Activated B cell treated with CpG ODN at 0.5 μM for 24 hours (primary cell): ENCODE measurements at regions of chr4 and their contacts with region 1.

Region 1: DNA sequence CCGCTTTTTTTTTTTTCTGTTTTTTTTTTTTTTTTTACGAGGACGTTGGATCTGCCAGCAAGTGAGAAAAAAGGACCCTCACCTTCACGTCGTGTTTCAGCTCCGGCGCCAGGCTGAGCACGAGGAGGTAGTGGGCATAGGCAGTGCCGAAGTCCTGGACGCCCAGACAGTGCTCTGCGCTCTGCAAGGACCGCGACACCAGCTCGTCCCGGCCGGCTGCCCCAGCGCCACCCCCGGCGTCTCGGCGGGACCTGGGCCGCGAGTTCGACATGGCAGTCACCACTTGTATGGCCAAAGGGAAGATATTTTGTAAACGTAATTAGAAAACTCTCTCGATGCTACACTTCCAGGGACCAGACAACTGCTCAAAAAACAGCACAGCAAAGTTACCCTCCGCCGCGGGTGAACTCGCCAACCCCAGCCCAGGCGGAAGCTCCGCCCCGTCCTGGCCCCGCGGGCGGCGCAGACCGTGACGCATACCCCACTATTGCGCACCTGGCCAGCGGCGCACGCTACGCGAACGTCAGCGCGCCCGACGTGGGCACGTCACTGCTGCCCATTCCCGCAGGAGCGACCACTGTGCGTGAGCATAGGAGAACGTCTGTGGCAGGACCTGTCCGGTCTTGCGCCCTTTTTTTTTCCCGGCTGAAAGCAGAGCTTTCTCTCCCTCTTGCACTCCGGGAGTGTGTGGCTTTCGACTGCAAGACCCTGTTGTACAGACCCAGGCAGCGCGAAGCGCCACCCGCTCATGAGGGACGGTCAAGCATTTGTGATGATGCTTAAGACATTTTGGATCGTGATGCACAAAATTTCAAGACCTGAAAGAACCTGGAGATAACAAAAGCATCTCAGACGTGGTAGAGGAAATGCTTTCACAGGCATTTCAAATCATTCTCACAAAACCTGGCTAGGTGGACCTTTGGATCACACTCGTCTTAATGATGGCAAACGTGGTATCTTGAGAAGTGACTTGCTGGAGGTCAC is at the start of gene PRMT9:
- DNase-seq: peak; percentile 83
- ATAC-seq: peak; percentile 97
- H3K4me3 Mint-ChIP-seq: peak within 1 kb of the TSS; percentile 97
- H3K27ac Mint-ChIP-seq: peak within 1 kb of the TSS; percentile 94
- H3K4me1 Mint-ChIP-seq: peaks cover 23% of the 10 kb centered on the region
- H3K27me3 Mint-ChIP-seq: peaks cover 6% of the 10 kb centered on the region
- CTCF ChIP-seq: no peak
- total RNA-seq, gene PRMT9: 7.4 and 8.9 TPM in 2 replicates

Region 2: DNA sequence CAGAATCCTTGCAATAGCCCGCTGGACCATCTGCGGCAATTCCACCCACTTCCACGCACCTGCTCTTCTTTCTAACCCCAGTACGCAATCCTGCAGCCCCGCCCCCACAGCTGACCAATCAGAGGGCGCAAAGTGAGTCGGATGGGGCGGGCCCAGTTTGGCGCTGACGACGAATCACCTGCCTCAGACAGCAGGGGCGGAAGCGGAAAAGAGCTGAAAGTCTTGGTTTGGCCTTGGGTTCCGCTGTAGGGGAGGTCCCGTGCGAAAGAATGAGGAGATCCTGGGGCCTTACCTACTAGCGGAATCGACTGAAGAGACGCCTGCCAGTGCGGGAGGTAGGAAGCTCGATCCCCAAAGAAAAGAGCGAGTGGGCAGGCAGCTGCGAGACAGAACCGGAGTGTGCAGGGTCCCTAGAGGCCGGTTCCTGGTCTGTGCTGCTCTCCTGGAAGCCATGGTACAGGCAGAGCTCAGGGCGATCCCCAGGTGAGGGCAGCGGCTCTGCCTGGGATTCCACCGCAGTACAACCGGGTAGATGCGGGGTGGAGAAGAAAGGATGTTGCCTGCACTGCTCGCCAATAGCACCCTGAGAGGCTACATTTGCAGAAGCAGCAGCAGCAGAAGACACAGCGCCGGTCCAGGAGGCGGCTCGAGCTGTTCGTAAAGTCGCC is 66.7 kb before region 1 on chr4 and contains the start of gene TMEM184C:
- CTCF ChIA-PET with region 1: interaction called, 3 read pairs
- POLR2A ChIA-PET with region 1: interaction called, 43 read pairs
- intact Hi-C with region 1: loop called (anchors 1 kb)
- DNase-seq: peak; percentile 97
- ATAC-seq: peak; percentile 97
- H3K4me3 Mint-ChIP-seq: peak within 1 kb of the TSS; percentile 98
- H3K27ac Mint-ChIP-seq: peak within 1 kb of the TSS; percentile 96
- H3K4me1 Mint-ChIP-seq: peaks cover 44% of the 10 kb centered on the region
- H3K27me3 Mint-ChIP-seq: peaks cover 2% of the 10 kb centered on the region
- CTCF ChIP-seq: no peak
- total RNA-seq, gene TMEM184C: 25.0 and 27.9 TPM in 2 replicates

Region 3: GRCh38 chr4:147731580-147732517 is 47.8 kb after region 1 on chr4 and contains the start of gene ARHGAP10:
- CTCF ChIA-PET with region 1: no interaction called
- POLR2A ChIA-PET with region 1: interaction called, 3 read pairs
- intact Hi-C with region 1: loop called (anchors 2 kb)
- DNase-seq: peak; percentile 36
- ATAC-seq: peak; percentile 74
- H3K4me3 Mint-ChIP-seq: peak within 1 kb of the TSS; percentile 87
- H3K27ac Mint-ChIP-seq: no peak within 1 kb of the TSS
- H3K4me1 Mint-ChIP-seq: peaks cover 16% of the 10 kb centered on the region
- H3K27me3 Mint-ChIP-seq: peaks cover 32% of the 10 kb centered on the region
- CTCF ChIP-seq: no peak
- total RNA-seq, gene ARHGAP10: 0.42 and 0.60 TPM in 2 replicates

Region 4: DNA sequence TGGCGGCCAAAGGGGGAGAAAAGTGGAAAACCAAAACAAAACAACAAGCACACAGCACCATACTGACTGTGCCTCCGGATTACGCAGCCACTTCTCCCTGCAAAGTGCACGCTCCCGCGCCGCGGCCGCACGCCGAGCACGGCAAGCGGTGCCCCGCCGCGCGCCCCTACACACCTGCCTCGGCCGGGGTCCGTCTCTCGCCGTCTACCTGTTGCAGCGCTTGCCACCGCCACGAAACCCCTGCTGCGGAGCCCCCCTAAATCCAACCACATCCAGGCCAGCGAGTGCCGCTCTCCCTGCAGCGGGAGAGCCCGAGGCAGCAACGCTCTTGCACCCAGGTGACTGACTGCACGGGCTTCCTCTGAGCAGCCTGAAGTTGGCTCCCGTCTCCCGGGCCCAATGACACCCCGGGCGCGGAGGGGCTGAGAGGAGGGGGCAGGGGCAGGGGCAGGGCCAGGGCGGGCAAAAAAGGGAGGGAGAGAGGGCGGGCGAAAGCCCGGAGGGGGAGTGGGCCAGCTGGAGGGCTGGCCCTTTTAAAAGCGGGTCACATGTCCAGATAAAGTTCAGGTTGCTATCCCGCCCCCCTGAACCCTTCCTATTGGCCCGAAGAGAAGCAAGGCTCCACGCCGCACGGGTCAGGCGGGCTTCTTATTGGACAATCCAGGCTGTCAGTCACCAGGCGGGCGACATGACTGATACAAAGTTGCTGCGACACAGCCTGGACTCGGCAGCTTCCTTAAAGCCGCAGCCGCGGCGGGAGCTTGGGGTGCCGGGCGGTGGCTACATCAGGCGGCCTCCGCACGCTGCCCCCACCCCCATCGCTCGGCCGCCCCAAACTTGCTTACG is 758.2 kb after region 1 on chr4 and contains the start of gene NR3C2:
- CTCF ChIA-PET with region 1: no interaction called
- POLR2A ChIA-PET with region 1: interaction called, 12 read pairs
- intact Hi-C with region 1: loop called (anchors 1 kb)
- DNase-seq: peak; percentile 81
- ATAC-seq: peak; percentile 83
- H3K4me3 Mint-ChIP-seq: peak within 1 kb of the TSS; percentile 92
- H3K27ac Mint-ChIP-seq: peak within 1 kb of the TSS; percentile 97
- H3K4me1 Mint-ChIP-seq: peaks cover 33% of the 10 kb centered on the region
- H3K27me3 Mint-ChIP-seq: peaks cover 2% of the 10 kb centered on the region
- CTCF ChIP-seq: no peak
- total RNA-seq, gene NR3C2: 3.9 and 4.5 TPM in 2 replicates